T-cell (primary cell): ENCODE measurements at regions of chr13 and their contacts with region 1.

Region 1: DNA sequence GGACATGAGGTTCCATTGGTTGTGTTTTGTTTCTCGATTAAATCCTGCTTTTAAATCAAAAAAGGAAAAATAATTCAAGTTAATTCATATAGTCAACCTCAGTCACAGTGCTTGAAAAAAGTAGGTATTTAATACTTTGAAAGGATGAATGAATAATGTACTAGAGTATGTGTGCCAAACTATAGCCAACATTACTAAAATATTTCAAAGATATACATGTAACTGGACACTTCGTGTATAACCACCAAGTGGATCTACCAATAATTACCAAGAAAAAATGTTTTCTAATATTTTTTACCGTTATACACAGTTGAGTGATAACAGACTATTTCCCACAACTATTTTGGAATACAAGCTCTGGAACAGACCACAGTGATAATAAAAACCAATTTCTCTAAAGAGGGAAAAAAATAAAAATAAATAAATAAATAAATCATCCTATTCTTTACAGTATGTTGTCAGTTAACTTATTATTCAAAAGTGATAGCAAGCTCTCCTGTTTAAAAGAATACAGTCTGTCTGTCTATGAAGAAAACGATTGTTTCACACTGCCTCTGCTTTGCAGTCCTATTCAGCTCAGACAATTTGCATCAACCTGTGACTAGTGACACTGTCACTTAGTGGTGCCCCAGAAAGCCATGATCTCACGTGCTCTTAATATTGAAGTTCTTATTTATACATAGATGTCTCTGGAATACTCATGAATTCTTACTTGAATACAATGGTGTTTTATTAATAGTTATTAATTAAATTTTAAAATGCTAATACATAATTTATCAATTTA is 58.2 kb downstream of the UBL3 start:
- DNase-seq: no peak
- ATAC-seq: no peak
- H3K4me3 ChIP-seq: no peak overlapping the region
- H3K4me3 Mint-ChIP-seq: no peak overlapping the region
- H3K27ac ChIP-seq: no peak overlapping the region
- H3K27ac Mint-ChIP-seq: no peak overlapping the region
- H3K4me1 ChIP-seq: no peaks in the 10 kb centered on the region
- H3K4me1 Mint-ChIP-seq: peaks cover 58 to 69% (median 66%) of the 10 kb centered on the region in 3 donors
- H3K27me3 ChIP-seq: no peaks in the 10 kb centered on the region
- H3K27me3 Mint-ChIP-seq: no peaks in the 10 kb centered on the region

Region 2: GRCh38 chr13:29583073-29583785 is 209.0 kb before region 1 on chr13:
- CTCF ChIA-PET with region 1: no interaction called
- POLR2A ChIA-PET with region 1: interaction called in 1 of 2 experiments, 12 read pairs
- DNase-seq: no peak
- ATAC-seq: no peak
- H3K4me3 ChIP-seq: no peak overlapping the region
- H3K4me3 Mint-ChIP-seq: no peak overlapping the region
- H3K27ac ChIP-seq: no peak overlapping the region
- H3K27ac Mint-ChIP-seq: no peak overlapping the region
- H3K4me1 ChIP-seq: no peaks in the 10 kb centered on the region
- H3K4me1 Mint-ChIP-seq: peaks cover 53 to 70% (median 64%) of the 10 kb centered on the region in 3 donors
- H3K27me3 ChIP-seq: no peaks in the 10 kb centered on the region
- H3K27me3 Mint-ChIP-seq: no peaks in the 10 kb centered on the region